MCF 10A (cell line): ENCODE measurements at regions of chr1 and their contacts with region 1.

Region 1: DNA sequence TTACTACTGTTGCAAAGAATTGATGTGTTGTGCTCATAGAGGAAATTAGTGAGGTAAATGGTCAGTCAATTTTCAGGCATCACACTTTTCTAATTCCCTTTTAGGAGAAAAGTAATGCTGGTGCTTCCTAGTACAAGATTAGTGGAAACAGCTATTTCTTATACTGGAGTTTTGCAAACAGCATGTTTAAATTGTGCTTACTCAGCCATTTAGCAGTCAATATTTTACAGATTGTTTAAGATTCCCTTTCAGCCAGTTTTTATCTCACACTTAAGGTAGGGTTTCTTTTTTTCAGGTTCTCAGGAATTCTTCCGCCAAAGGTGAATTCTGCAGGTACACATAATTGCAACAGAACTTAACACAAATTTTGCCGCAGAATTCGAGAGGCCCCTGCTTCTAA is 10.9 kb downstream of the SRRM1 start:
- DNase-seq: no peak
- H3K4me3 Mint-ChIP-seq: no peak overlapping the region
- H3K27ac Mint-ChIP-seq: peak overlapping the region; percentile 22
- H3K4me1 Mint-ChIP-seq: peaks cover 10% of the 10 kb centered on the region
- H3K27me3 Mint-ChIP-seq: no peaks in the 10 kb centered on the region
- CTCF ChIP-seq: no peak

Region 2: GRCh38 chr1:24642481-24643361 is 11.3 kb before region 1 on chr1 and contains the start of gene SRRM1:
- CTCF ChIA-PET with region 1: no interaction called
- POLR2A ChIA-PET with region 1: interaction called, 13 read pairs
- intact Hi-C with region 1: no loop called
- DNase-seq: peak; percentile 100
- H3K4me3 Mint-ChIP-seq: peak within 1 kb of the TSS; percentile 98
- H3K27ac Mint-ChIP-seq: peak within 1 kb of the TSS; percentile 99
- H3K4me1 Mint-ChIP-seq: peaks cover 25% of the 10 kb centered on the region
- H3K27me3 Mint-ChIP-seq: no peaks in the 10 kb centered on the region
- CTCF ChIP-seq: no peak
- total RNA-seq, gene SRRM1: 154 and 171 TPM in 2 replicates